ENCODE measurements at regions of chr4 and their contacts with region 1.

Region 1: DNA sequence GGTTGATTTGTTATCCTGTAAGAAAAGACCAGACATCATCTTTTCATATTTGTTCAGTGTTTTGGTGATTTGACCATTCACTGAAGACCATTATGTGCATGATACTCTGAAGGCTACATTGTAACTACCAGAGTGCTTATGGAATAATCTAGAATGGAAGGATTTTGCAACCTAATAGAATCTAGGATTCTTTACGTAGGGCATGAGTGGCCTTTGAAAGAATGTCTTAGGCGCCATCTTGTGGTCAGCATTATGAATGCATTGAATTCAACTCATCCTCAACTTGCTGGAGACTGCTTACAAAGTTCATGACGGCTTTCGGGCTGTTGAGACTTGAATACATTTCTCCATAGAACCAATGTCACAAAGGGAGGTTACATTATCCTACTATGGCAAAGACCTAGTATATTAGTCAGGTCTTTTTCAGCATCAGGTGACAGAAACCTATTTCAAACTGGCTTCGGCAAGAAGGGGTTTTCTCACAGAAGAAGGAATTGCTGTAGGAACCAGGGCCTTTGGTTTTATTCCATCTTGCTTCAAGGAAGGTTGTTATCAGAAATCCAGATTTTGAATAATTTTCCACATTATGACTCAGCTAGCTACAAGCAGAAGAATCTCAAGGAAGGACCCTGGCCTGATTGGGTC is 104.1 kb downstream of the GPAT3 start:
- ATAC-seq: peak; percentile 68 to 87 (median 78)
- H3K4me3 ChIP-seq: no peak overlapping the region
- H3K27ac ChIP-seq: no peak overlapping the region
- H3K4me1 ChIP-seq: peaks cover 0 to 5% of the 10 kb centered on the region in 2 donors

Region 2: GRCh38 chr4:83516042-83516772 is 123.8 kb before region 1 on chr4:
- in situ Hi-C with region 1: loop called in 3 of 9 experiments (anchors 10 to 25 kb)
- ATAC-seq: peak in 1 of 8 experiments; percentile 30
- H3K4me3 ChIP-seq: no peak overlapping the region
- H3K27ac ChIP-seq: no peak overlapping the region
- H3K4me1 ChIP-seq: no peaks in the 10 kb centered on the region

Region 3: DNA sequence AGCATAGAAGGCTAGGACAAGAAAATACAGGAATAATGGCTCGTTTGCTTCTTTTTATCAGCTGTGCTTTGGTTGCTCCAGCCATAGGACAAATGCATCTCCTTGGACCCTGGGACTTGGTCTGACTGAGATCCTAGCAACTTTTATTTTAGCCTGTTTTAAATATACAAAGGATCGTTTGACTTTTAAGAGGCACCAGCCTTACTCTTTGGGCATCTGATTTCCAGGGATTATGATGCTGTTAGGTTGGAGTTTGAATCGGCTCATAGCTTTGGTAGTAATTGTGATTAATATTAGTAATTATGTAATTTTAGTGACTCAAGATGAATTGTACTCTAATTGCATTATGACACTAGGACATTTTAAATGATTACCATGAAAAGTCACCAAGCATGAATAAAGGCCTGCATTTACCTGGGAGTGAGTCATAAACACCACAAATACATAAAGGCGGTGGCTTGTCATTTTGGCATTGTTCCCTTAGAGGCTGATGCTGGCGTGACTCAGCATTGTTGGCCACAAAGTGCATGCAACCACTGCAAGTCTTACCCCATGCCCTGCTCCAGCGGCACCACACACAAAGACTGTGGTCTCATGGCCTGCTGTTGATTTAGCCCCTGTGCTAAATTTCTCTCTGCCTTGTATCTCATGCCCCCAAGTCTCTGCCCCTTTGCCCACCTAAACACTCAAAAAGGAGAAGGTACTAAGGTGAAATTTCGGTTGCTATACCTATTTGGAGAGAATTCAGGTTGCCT is 91.6 kb before region 1 on chr4:
- in situ Hi-C with region 1: no loop called
- ATAC-seq: peak; percentile 83 to 98 (median 90)
- H3K4me3 ChIP-seq: no peak overlapping the region
- H3K27ac ChIP-seq: no peak overlapping the region
- H3K4me1 ChIP-seq: peaks cover 6 to 14% of the 10 kb centered on the region in 2 donors

Region 4: GRCh38 chr4:83582289-83582769 is 57.6 kb before region 1 on chr4:
- in situ Hi-C with region 1: loop called in 1 of 9 experiments (anchors 10 kb)
- ATAC-seq: peak in 1 of 8 experiments; percentile 79
- H3K4me3 ChIP-seq: no peak overlapping the region
- H3K27ac ChIP-seq: no peak overlapping the region
- H3K4me1 ChIP-seq: no peaks in the 10 kb centered on the region